CD4-positive, alpha-beta T cell (primary cell): ENCODE measurements at regions of chr6 and their contacts with region 1.

Region 1: GRCh38 chr6:25992413-25993037 is 29.9 kb downstream of the TRIM38 start:
- DNase-seq: peak; percentile 84 to 96 (median 93)
- ATAC-seq: peak; percentile 95
- H3K4me3 ChIP-seq: peak overlapping the region; percentile 55
- H3K4me3 Mint-ChIP-seq: peak overlapping the region; percentile 97
- H3K27ac ChIP-seq: peak overlapping the region; percentile 31 to 69
- H3K27ac Mint-ChIP-seq: peak overlapping the region; percentile 97
- H3K4me1 ChIP-seq: peaks cover 15% of the 10 kb centered on the region
- H3K4me1 Mint-ChIP-seq: peaks cover 37% of the 10 kb centered on the region
- H3K27me3 ChIP-seq: no peaks in the 10 kb centered on the region
- H3K27me3 Mint-ChIP-seq: no peaks in the 10 kb centered on the region
- CTCF ChIP-seq: peak; percentile 100

Region 2: DNA sequence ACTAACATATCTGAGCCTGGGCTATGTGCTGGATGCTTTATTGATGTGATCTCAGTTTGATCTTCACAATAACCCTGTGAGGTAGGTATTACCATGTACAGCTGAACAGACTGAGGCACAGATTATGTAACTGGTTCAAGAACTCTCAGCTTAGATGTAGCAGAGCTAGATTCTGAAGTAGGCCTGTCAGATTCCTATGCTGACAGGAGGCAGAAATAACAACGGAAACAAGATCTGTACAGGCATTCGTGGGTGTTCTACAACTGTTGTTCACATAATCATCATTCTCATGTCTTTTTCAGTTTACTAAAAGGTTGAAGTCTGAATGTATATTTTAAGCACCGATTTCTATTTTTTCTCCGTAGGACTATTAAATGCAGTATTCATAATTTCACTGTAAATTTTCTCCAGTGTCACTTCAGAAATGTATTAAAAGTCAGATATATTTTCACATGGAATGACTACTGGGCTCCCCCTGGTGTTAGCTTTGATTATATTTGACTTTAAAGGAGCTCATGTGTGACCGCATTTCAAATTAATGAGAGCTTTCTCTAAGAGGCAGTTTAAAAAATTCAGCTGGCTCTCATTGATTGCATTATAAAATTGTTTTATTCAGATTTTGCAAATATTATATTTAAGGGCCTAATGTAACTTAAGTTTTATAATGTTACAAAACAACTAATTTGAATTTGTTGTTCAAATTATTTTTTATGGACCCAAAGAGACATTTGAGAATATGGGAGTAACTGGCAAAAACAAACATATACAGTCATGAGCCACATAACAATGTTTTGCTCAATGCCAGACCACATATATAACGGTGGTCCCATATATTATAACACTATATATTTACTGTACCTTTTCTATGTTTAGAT is 274.4 kb before region 1 on chr6:
- CTCF ChIA-PET with region 1: interaction called, 4 read pairs
- POLR2A ChIA-PET with region 1: no interaction called
- intact Hi-C with region 1: loop called (anchors 1 to 2 kb)
- DNase-seq: peak in 3 of 14 experiments; percentile 22 to 39 (median 35)
- ATAC-seq: no peak
- H3K4me3 ChIP-seq: no peak overlapping the region
- H3K4me3 Mint-ChIP-seq: no peak overlapping the region
- H3K27ac ChIP-seq: no peak overlapping the region
- H3K27ac Mint-ChIP-seq: no peak overlapping the region
- H3K4me1 ChIP-seq: no peaks in the 10 kb centered on the region
- H3K4me1 Mint-ChIP-seq: no peaks in the 10 kb centered on the region
- H3K27me3 ChIP-seq: peaks cover 0 to 5% of the 10 kb centered on the region in 2 experiments
- H3K27me3 Mint-ChIP-seq: peaks cover 15% of the 10 kb centered on the region
- CTCF ChIP-seq: peak; percentile 59

Region 3: GRCh38 chr6:25882051-25882496 is 110.5 kb before region 1 on chr6:
- CTCF ChIA-PET with region 1: interaction called, 12 read pairs
- POLR2A ChIA-PET with region 1: interaction called, 4 read pairs
- intact Hi-C with region 1: loop called in 1 of 2 experiments (anchors 10 kb)
- DNase-seq: peak in 13 of 14 experiments; percentile 4 to 82 (median 26)
- ATAC-seq: peak; percentile 87
- H3K4me3 ChIP-seq: no peak overlapping the region
- H3K4me3 Mint-ChIP-seq: peak overlapping the region; percentile 90
- H3K27ac ChIP-seq: no peak overlapping the region
- H3K27ac Mint-ChIP-seq: peak overlapping the region; percentile 83
- H3K4me1 ChIP-seq: no peaks in the 10 kb centered on the region
- H3K4me1 Mint-ChIP-seq: peaks cover 4% of the 10 kb centered on the region
- H3K27me3 ChIP-seq: no peaks in the 10 kb centered on the region
- H3K27me3 Mint-ChIP-seq: peaks cover 5% of the 10 kb centered on the region
- CTCF ChIP-seq: peak; percentile 44

Region 4: GRCh38 chr6:25962149-25963127 is 30.1 kb before region 1 on chr6 and contains the start of gene TRIM38:
- CTCF ChIA-PET with region 1: interaction called, 38 read pairs
- POLR2A ChIA-PET with region 1: interaction called, 33 read pairs
- intact Hi-C with region 1: loop called in 1 of 2 experiments (anchors 2 kb)
- DNase-seq: peak; percentile 47 to 96 (median 69)
- ATAC-seq: peak; percentile 87
- H3K4me3 ChIP-seq: peak within 1 kb of the TSS; percentile 86
- H3K4me3 Mint-ChIP-seq: peak within 1 kb of the TSS; percentile 97
- H3K27ac ChIP-seq: peak within 1 kb of the TSS; percentile 88 to 95
- H3K27ac Mint-ChIP-seq: peak within 1 kb of the TSS; percentile 97
- H3K4me1 ChIP-seq: peaks cover 76% of the 10 kb centered on the region
- H3K4me1 Mint-ChIP-seq: peaks cover 78% of the 10 kb centered on the region
- H3K27me3 ChIP-seq: no peaks in the 10 kb centered on the region
- H3K27me3 Mint-ChIP-seq: no peaks in the 10 kb centered on the region
- CTCF ChIP-seq: no peak
- total RNA-seq, gene TRIM38: 17.0 to 17.5 TPM

Region 5: GRCh38 chr6:25981568-25982263 is 10.8 kb before region 1 on chr6:
- CTCF ChIA-PET with region 1: interaction called, 33 read pairs
- POLR2A ChIA-PET with region 1: interaction called, 4 read pairs
- intact Hi-C with region 1: no loop called
- DNase-seq: no peak
- ATAC-seq: no peak
- H3K4me3 ChIP-seq: no peak overlapping the region
- H3K4me3 Mint-ChIP-seq: no peak overlapping the region
- H3K27ac ChIP-seq: no peak overlapping the region
- H3K27ac Mint-ChIP-seq: no peak overlapping the region
- H3K4me1 ChIP-seq: no peaks in the 10 kb centered on the region
- H3K4me1 Mint-ChIP-seq: peaks cover 19% of the 10 kb centered on the region
- H3K27me3 ChIP-seq: no peaks in the 10 kb centered on the region
- H3K27me3 Mint-ChIP-seq: no peaks in the 10 kb centered on the region
- CTCF ChIP-seq: no peak

Region 6: GRCh38 chr6:26020329-26021000 is 27.9 kb after region 1 on chr6:
- CTCF ChIA-PET with region 1: interaction called, 62 read pairs
- POLR2A ChIA-PET with region 1: interaction called, 103 read pairs
- intact Hi-C with region 1: loop called in 1 of 2 experiments (anchors 1 kb)
- DNase-seq: peak; percentile 63 to 96 (median 78)
- ATAC-seq: peak; percentile 50
- H3K4me3 ChIP-seq: peak overlapping the region; percentile 73
- H3K4me3 Mint-ChIP-seq: peak overlapping the region; percentile 95
- H3K27ac ChIP-seq: peak overlapping the region; percentile 95 to 96
- H3K27ac Mint-ChIP-seq: peak overlapping the region; percentile 97
- H3K4me1 ChIP-seq: peaks cover 38% of the 10 kb centered on the region
- H3K4me1 Mint-ChIP-seq: peaks cover 41% of the 10 kb centered on the region
- H3K27me3 ChIP-seq: no peaks in the 10 kb centered on the region
- H3K27me3 Mint-ChIP-seq: no peaks in the 10 kb centered on the region
- CTCF ChIP-seq: no peak

Region 7: DNA sequence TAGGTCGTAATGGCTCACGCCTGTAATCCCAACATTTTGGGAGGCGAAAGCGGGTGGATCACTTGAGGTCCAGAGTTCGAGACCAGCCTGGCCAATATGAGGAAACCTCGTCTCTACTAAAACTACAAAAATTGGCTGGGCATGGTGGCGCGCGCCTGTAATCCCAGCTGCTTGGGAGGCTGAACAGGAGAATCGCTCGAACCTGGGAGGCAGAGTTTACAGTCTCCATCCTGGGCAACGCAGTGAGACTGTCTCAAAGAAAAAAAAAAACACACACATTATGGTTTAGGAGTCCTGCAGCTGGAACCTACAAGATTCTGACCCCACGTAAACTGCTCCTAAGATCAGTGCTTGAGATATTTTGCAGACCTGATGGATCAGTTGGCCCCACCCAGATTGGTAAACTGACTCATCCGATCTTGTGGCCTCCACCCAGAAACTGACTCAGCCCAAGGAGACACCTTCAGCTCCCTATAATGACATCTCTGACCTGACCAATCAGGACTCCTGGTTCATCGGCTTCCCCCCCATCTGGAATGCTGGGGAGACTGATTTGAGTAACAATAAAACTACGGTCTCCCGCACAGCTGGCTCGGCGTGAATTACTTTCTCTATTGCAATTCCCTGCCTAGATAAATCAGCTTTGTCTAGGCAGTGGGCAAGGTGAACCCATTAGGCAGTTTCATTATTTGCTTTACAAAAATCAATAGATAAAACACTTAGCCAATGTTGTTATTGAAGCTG is 276.3 kb after region 1 on chr6:
- CTCF ChIA-PET with region 1: no interaction called
- POLR2A ChIA-PET with region 1: no interaction called
- intact Hi-C with region 1: no loop called
- DNase-seq: peak in 2 of 14 experiments; percentile 10 to 33
- ATAC-seq: no peak
- H3K4me3 ChIP-seq: no peak overlapping the region
- H3K4me3 Mint-ChIP-seq: no peak overlapping the region
- H3K27ac ChIP-seq: no peak overlapping the region
- H3K27ac Mint-ChIP-seq: no peak overlapping the region
- H3K4me1 ChIP-seq: peaks cover 28% of the 10 kb centered on the region
- H3K4me1 Mint-ChIP-seq: peaks cover 7% of the 10 kb centered on the region
- H3K27me3 ChIP-seq: no peaks in the 10 kb centered on the region
- H3K27me3 Mint-ChIP-seq: no peaks in the 10 kb centered on the region
- CTCF ChIP-seq: no peak

Region 8: GRCh38 chr6:26375270-26375669 is 382.7 kb after region 1 on chr6:
- CTCF ChIA-PET with region 1: no interaction called
- POLR2A ChIA-PET with region 1: no interaction called
- intact Hi-C with region 1: no loop called
- DNase-seq: peak in 1 of 14 experiments; percentile 25
- ATAC-seq: no peak
- H3K4me3 ChIP-seq: no peak overlapping the region
- H3K4me3 Mint-ChIP-seq: no peak overlapping the region
- H3K27ac ChIP-seq: peak overlapping the region; percentile 16 to 52
- H3K27ac Mint-ChIP-seq: peak overlapping the region; percentile 80
- H3K4me1 ChIP-seq: peaks cover 16% of the 10 kb centered on the region
- H3K4me1 Mint-ChIP-seq: peaks cover 44% of the 10 kb centered on the region
- H3K27me3 ChIP-seq: no peaks in the 10 kb centered on the region
- H3K27me3 Mint-ChIP-seq: no peaks in the 10 kb centered on the region
- CTCF ChIP-seq: no peak